GM10248 (cell line): ENCODE measurements at regions of chr6 and their contacts with region 1.

Region 1: GRCh38 chr6:75855052-75855451 is 106.0 kb downstream of the MYO6 start:
- DNase-seq: peak; percentile 20
- CTCF ChIP-seq: peak; percentile 55

Region 2: DNA sequence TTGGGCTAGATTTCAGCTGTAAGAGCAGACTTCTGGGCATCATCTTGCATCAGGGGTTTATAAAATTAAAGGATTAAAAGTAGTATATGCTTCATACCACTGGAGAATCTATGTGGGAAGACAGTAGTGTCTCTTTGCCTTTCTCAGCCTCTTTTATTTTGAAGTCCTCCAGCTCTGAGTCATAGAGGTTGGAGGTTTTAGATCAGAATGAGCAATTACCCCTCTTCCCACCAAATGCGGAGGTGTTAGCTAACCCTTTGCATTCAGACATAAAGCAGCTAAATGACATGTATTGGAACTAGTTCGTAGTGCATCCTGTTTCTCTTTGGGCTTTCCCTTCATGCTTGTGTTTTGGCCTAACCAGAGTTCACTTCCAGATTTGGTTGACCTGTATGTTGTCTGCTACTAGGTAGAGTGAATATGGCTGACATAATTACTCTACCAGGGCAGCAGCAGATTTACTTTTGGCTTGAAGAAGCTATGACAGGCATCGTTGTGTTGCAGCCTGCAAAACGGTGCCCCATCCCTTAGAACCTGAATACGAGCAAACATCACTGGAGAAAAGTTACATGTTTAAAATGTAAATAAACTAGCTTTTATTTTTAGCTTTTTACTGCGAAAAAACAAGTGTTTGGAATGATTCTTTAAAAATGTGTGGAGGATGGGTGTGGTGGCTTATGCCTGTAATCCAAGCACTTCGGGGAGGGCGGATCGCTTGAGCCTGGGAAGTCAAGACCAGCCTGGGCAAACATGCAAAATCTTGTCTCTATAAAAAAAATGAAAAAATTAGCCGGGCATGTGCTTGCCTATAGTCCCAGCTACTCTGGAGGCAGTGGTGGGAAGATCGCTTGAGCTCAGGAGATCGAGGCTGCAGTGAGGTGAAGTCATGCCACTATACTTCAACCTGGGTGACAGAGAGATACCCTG is 23.8 kb before region 1 on chr6:
- CTCF ChIA-PET with region 1: interaction called, 13 read pairs
- POLR2A ChIA-PET with region 1: no interaction called
- DNase-seq: peak; percentile 28
- CTCF ChIP-seq: no peak